ENCODE measurements at regions of chr2 and their contacts with region 1.

Region 1: DNA sequence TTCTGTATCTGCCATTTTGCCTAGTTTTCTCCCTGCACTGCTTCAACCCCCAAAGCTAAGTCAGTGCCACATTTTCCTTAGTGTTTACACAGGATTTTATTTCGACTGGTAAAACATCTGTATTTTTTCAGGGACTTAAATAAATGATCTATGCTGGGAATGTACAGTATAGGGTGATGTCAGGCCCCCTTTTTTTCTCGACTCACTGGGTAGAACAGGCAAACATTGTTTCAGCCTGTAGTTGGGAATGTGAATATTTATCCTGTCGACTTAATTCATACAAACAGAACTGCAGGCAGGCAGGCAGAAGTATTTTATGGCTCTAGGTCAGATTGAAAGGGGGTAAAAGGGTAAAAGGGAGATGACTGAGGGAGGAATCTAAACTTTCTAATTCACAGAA is 123.5 kb upstream of the ZFP36L2 start:
- DNase-seq: no peak
- H3K4me3 ChIP-seq: no peak overlapping the region
- H3K27ac ChIP-seq: peak overlapping the region; percentile 89 to 94
- H3K4me1 ChIP-seq: peaks cover 8 to 25% of the 10 kb centered on the region in 2 donors
- H3K27me3 ChIP-seq: no peaks in the 10 kb centered on the region
- CTCF ChIP-seq: no peak
- POLR2A ChIP-seq: no peak

Region 2: DNA sequence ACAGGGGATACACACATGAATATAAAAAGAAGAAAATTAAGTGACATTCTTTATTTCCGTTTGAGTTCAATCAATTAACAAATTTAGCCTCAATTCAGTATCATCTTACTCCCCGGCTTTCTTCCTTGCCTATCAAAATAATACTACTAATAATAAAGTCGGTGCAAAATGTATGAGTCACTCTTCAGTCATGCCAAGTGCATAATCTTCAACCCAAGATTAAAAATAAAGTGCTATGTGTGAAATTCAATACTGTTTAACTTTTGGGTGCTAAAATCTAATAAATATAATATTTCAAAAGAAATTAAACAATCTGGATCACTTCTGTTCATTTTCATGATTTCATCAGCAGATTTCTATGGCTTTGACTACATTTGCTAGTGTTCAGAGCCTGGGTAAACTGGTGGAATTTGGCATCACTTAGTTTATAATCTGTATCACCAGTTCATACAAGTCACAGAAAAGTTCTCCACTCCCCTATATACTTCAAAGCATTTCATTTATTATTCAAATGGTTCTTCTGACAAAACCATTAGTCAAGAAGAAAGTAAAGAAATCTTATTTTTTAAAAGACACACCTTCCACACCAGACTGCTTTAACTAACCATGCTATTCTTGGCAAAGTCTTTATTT is 62.3 kb after region 1 on chr2:
- intact Hi-C with region 1: loop called (anchors 10 kb)
- DNase-seq: no peak
- H3K4me3 ChIP-seq: no peak overlapping the region
- H3K27ac ChIP-seq: peak overlapping the region; percentile 38 to 80
- H3K4me1 ChIP-seq: peaks cover 4 to 22% of the 10 kb centered on the region in 2 donors
- H3K27me3 ChIP-seq: no peaks in the 10 kb centered on the region
- CTCF ChIP-seq: no peak
- POLR2A ChIP-seq: no peak

Region 3: DNA sequence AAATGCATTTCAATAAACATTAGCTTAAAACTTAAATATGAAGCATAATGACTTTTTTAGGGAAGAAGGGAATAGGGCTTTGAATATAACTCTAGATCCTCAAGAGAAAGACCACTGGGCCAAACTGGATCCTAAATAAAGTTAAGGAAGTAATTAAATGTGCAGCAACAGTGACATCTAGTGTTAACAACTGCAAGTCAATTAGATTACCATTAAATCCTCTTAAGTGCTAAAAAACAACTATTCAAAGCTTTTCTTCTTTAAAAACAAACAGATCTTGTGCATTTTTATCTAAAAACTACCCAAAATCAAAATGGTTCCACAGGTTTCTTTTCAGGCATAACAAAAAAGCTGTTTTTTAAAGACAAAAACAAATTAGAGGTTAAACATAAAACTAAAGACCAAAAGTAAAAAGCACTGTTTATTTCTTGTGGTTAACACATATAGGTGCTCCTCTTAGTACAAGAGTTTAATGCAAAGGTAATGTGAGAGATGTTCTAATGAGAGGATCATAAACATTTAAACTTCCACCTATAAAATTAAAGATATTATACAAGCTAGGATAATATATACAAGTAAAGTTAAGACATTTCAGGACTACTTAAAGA is 134.5 kb after region 1 on chr2:
- intact Hi-C with region 1: no loop called
- DNase-seq: no peak
- H3K4me3 ChIP-seq: no peak overlapping the region
- H3K27ac ChIP-seq: peak overlapping the region; percentile 68 to 81
- H3K4me1 ChIP-seq: peaks cover 0 to 7% of the 10 kb centered on the region in 2 donors
- H3K27me3 ChIP-seq: no peaks in the 10 kb centered on the region
- CTCF ChIP-seq: peak; percentile 63 to 87 (median 74)
- POLR2A ChIP-seq: no peak